SK-N-SH (cell line): ENCODE measurements at regions of chr7 and their contacts with region 1.

Region 1: DNA sequence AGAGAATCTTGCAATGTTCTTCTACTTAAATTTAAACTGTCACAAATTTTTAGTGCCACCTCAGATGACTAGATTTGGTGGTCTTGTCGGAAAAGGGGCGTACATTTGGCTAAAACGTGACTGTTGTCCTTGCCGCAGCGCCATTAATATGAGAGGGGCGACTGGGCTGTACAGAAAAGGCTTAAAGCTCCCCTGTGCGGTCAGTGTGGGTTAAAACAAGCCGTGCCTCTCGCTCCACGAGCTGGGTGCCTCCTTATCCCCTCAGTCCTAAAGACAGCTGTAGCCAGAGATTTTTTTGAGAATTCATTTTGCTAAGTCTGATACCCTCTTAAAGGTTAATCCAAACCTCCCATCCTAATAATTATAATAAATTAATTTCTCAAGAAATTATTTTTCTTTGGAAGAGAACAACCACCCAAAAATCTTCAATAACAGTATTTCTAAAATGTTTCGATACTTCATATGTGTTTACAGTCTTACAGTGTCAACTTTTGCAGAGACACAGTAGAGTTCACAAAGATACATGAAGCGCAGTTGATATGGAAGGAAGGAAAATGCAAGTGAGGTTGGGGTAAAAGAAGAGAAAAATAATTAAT is 68.6 kb downstream of the C7orf25 start:
- DNase-seq: peak; percentile 67
- H3K4me3 ChIP-seq: 0 out of 4 replicates have a peak overlapping the region, but pooled peaks of 1 of the 2 experiments have one; percentile 44
- H3K27ac ChIP-seq: no peak overlapping the region
- H3K4me1 ChIP-seq: no peaks in the 10 kb centered on the region
- H3K27me3 ChIP-seq: peaks cover 32% of the 10 kb centered on the region; the same call in 1 of the 2 replicates
- CTCF ChIP-seq: peak; percentile 68
- EP300 ChIP-seq: no peak
- RAD21 ChIP-seq: peak; percentile 83

Region 2: DNA sequence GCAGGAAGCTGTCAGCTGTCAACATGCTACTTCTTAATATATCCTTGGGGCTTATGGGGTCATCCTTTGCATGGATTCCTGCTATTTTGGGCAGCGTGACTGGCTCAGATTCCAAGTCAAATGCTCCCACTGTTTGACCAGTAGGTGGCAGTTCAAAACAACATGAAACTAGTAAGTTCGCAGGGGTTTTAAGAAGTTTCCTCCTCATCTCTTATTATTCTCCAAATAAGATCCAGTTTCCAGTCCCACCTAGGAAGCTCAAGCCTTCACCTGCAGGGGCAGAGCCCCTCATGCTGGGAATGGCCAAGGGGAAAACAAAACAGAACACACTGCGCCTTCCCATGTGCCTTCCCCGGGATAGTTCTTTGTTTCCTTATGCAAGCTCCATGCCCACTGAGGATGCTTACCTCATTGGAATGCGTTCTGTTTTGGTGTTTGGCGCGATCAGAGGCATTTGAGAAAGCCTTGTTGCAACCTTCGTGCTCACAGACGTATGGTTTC is 866.1 kb before region 1 on chr7:
- CTCF ChIA-PET with region 1: interaction called, 74 read pairs
- POLR2A ChIA-PET with region 1: no interaction called
- DNase-seq: peak; percentile 43
- H3K4me3 ChIP-seq: peak overlapping the region in 1 of 2 experiments; percentile 7; a peak in 1 of 4 replicates
- H3K27ac ChIP-seq: no peak overlapping the region
- H3K4me1 ChIP-seq: no peaks in the 10 kb centered on the region
- H3K27me3 ChIP-seq: peaks cover 29% of the 10 kb centered on the region
- CTCF ChIP-seq: peak; percentile 98
- EP300 ChIP-seq: no peak
- RAD21 ChIP-seq: peak; percentile 75

Region 3: GRCh38 chr7:42567051-42567450 is 276.3 kb before region 1 on chr7:
- CTCF ChIA-PET with region 1: no interaction called
- POLR2A ChIA-PET with region 1: no interaction called
- DNase-seq: no peak
- H3K4me3 ChIP-seq: no peak overlapping the region
- H3K27ac ChIP-seq: no peak overlapping the region
- H3K4me1 ChIP-seq: no peaks in the 10 kb centered on the region
- H3K27me3 ChIP-seq: peaks cover 13% of the 10 kb centered on the region; the same call in 1 of the 2 replicates
- CTCF ChIP-seq: no peak
- EP300 ChIP-seq: no peak
- RAD21 ChIP-seq: no peak

Region 4: DNA sequence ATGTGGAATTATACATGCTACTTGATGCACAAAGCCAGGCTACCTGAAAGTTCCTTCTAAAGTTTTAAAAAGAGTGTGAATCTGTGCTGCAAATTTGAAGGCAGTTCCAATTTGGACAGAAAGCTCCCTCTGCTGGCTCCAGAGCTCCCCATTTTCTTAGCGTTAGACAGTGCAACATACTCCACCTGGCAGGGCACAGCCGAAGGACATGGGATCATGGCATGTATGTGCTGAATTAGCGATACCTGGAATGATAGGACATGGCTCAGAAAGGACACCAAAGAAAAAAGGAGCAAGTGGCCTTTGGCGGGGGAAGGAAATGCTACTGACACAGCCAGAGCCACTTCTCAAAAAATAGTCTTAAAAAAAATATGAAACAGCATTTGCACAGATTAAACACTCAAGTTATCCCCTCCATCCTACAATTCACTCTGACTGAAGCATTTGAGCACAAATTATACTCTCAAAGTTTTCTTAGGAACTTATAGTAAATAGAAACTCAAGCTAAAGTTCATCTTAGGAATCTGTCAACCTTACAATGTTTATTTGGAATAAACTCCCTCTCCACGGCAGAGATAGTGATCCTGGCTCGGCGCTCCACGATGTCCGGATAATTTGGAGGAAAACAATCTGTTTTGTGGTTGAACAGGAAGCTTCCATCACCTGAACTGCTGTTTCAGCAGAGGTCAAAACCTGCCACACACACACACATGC is 11.4 kb before region 1 on chr7:
- CTCF ChIA-PET with region 1: interaction called, 10 read pairs
- POLR2A ChIA-PET with region 1: no interaction called
- DNase-seq: no peak
- H3K4me3 ChIP-seq: peak overlapping the region in 1 of 2 experiments; percentile 24; a peak in 1 of 4 replicates
- H3K27ac ChIP-seq: no peak overlapping the region
- H3K4me1 ChIP-seq: no peaks in the 10 kb centered on the region
- H3K27me3 ChIP-seq: peaks cover 48% of the 10 kb centered on the region
- CTCF ChIP-seq: peak; percentile 67
- EP300 ChIP-seq: no peak
- RAD21 ChIP-seq: peak; percentile 52

Region 5: GRCh38 chr7:42858570-42858969 is 15.3 kb after region 1 on chr7:
- CTCF ChIA-PET with region 1: interaction called, 15 read pairs
- POLR2A ChIA-PET with region 1: no interaction called
- DNase-seq: no peak
- H3K4me3 ChIP-seq: no peak overlapping the region
- H3K27ac ChIP-seq: no peak overlapping the region
- H3K4me1 ChIP-seq: peaks cover 4 to 8% of the 10 kb centered on the region in 2 experiments; a peak in 2 of 4 replicates
- H3K27me3 ChIP-seq: peaks cover 26% of the 10 kb centered on the region
- CTCF ChIP-seq: no peak
- EP300 ChIP-seq: no peak
- RAD21 ChIP-seq: no peak